Sigmoid colon (tissue), 7 donors: ENCODE measurements at regions of chr1 and their contacts with region 1.

Region 1: DNA sequence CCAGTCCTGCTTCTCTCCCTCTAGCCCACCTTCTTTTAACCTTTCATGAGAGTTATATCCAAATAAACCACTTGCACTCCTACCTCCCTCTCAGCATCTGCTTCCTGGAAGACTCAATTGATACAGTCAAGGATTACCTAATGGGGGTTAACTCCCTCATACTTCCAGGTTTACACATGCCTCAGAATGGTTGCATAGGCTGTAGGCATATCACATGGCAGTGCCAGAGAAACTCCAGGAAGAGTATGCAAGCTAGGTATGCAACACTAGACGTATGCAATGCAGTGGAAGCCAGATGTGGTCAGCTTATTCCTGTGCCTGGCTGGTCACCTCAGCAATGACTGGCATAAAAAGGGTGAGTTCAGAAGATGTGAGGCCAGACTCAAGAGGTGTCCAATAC is 32.7 kb upstream of the VANGL1 start:
- DNase-seq: no peak
- H3K4me3 ChIP-seq: no peak overlapping the region
- H3K27ac ChIP-seq: no peak overlapping the region
- H3K4me1 ChIP-seq: no peaks in the 10 kb centered on the region
- H3K27me3 ChIP-seq: no peaks in the 10 kb centered on the region
- CTCF ChIP-seq: no peak
- EP300 ChIP-seq: no peak
- POLR2A ChIP-seq: no peak

Region 2: DNA sequence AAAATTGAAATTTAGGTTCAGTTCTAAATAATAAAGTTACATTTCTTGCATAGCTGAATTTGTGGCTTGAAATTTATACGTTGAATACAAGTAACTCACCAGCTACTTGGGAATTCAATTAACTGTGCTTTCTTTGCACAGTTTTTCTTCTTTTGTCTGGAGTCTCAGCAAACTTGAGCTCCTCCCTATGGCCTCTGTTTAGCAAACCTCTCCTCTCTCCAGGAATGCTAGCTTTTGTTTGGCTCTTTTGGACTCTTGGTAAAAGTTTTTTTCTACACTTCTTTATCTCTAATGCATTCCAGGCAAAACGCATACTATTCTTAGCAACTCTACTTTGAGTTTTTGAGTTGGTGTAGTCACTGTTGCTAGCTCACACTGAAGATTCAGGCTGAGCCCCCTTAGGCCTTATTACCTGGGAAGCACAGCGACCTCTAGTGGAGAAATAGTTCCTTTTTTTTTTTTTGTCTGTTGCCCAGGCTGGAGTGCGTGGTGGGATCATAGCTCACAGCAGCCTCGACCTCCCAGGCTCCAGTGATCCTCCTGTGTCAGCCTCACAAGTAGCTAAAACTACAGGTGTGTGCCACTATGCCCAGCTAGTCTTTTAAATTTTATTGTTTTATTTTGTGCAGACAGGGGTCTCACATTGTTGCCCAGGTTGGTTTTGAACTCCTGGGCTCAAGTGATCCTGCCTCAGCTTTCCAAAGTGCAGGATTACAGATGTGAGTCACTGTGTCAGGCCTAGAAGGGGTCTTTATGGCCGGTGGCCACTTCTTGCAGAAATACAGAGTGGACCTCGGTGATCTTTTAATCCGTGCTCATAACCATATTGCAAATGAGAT is 97.8 kb after region 1 on chr1:
- intact Hi-C with region 1: loop called (anchors 2 kb)
- DNase-seq: no peak
- H3K4me3 ChIP-seq: no peak overlapping the region
- H3K27ac ChIP-seq: no peak overlapping the region
- H3K4me1 ChIP-seq: peaks cover 0 to 3% (median 0%) of the 10 kb centered on the region in 4 donors
- H3K27me3 ChIP-seq: no peaks in the 10 kb centered on the region
- CTCF ChIP-seq: peak in 2 of 4 experiments; percentile 41 to 67
- EP300 ChIP-seq: no peak
- POLR2A ChIP-seq: no peak

Region 3: GRCh38 chr1:115771847-115772457 is 162.9 kb after region 1 on chr1:
- intact Hi-C with region 1: loop called (anchors 5 kb)
- DNase-seq: peak; percentile 85
- H3K4me3 ChIP-seq: peak overlapping the region in 3 of 4 donors; percentile 8 to 35 (median 17)
- H3K27ac ChIP-seq: peak overlapping the region; percentile 53 to 86 (median 69)
- H3K4me1 ChIP-seq: peaks cover 0 to 22% (median 12%) of the 10 kb centered on the region in 4 donors
- H3K27me3 ChIP-seq: no peaks in the 10 kb centered on the region
- CTCF ChIP-seq: peak; percentile 66 to 84 (median 79)
- EP300 ChIP-seq: no peak
- POLR2A ChIP-seq: no peak